ENCODE measurements at regions of chr22 and their contacts with region 1.

Region 1: DNA sequence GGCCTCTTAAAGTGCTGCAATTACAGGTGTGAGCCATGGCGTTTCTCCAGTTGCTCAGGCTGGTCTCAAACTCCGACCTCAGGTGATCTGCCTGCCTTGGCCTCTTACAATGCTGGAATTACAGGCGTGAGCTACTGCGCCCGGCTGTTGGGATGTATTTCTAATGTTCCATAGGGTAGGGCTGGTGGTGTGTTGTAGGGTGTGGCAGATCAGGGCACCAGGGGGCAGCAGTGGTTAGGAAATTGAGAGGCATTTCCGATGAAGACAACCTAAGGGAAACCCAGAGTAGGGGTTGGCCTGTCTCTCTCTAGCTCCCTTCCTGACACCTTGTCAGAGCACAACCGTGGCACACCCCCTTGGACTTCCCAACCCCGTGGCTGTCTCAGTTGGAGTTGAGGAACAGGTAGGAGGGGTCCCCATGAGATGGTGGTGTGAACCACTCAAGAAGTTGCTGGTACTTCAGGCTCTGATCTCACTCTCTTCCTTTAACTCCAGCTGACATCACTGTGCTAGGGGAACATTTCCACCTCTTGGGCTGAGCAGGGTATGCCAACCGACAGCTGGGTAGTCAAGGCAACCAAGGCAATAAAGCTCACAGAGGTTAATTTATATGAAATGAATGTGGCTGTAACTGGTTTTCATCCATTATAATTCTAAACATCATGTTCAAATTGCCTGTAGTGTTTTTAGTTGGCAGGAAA is 33.0 kb downstream of the YWHAH start:
- DNase-seq: peak; percentile 91
- H3K4me3 ChIP-seq: no peak overlapping the region
- H3K27ac ChIP-seq: no peak overlapping the region
- H3K4me1 ChIP-seq: peaks cover 0 to 25% (median 5%) of the 10 kb centered on the region in 4 donors
- H3K27me3 ChIP-seq: no peaks in the 10 kb centered on the region
- CTCF ChIP-seq: peak; percentile 64 to 90 (median 75)
- EP300 ChIP-seq: no peak
- POLR2A ChIP-seq: no peak

Region 2: DNA sequence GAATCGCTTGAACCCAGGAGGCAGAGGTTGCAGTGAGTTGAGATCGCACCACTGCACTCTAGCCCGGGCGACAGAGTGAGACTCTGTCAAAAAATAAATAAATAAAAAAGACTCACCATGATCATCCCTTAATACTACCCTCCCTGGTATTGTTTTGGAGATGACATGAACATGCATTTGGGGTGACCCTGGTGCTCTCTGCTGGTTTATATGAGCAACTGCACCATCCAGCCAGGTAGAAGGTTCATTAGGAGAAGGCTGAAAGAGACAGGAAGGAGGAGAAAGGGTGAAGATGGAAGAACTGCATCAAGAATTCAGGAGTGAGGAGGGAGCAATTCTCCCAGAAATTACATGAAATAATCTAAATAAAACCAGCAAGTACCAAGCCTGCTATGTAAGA is 103.6 kb after region 1 on chr22:
- in situ Hi-C with region 1: loop called (anchors 5 to 25 kb)
- intact Hi-C with region 1: no loop called
- DNase-seq: peak; percentile 39
- H3K4me3 ChIP-seq: no peak overlapping the region
- H3K27ac ChIP-seq: no peak overlapping the region
- H3K4me1 ChIP-seq: peaks cover 0 to 33% (median 6%) of the 10 kb centered on the region in 4 donors
- H3K27me3 ChIP-seq: no peaks in the 10 kb centered on the region
- CTCF ChIP-seq: peak; percentile 47 to 82 (median 64)
- EP300 ChIP-seq: no peak
- POLR2A ChIP-seq: no peak

Region 3: GRCh38 chr22:32265882-32266767 is 288.8 kb after region 1 on chr22:
- in situ Hi-C with region 1: loop called in 3 of 4 experiments (anchors 10 to 25 kb)
- intact Hi-C with region 1: loop called (anchors 10 kb)
- DNase-seq: peak; percentile 66
- H3K4me3 ChIP-seq: peak overlapping the region in 1 of 4 donors; percentile 12
- H3K27ac ChIP-seq: peak overlapping the region in 1 of 4 donors; percentile 44
- H3K4me1 ChIP-seq: peaks cover 0 to 8% (median 0%) of the 10 kb centered on the region in 4 donors
- H3K27me3 ChIP-seq: no peaks in the 10 kb centered on the region
- CTCF ChIP-seq: peak; percentile 72 to 81 (median 76)
- EP300 ChIP-seq: no peak
- POLR2A ChIP-seq: no peak

Region 4: DNA sequence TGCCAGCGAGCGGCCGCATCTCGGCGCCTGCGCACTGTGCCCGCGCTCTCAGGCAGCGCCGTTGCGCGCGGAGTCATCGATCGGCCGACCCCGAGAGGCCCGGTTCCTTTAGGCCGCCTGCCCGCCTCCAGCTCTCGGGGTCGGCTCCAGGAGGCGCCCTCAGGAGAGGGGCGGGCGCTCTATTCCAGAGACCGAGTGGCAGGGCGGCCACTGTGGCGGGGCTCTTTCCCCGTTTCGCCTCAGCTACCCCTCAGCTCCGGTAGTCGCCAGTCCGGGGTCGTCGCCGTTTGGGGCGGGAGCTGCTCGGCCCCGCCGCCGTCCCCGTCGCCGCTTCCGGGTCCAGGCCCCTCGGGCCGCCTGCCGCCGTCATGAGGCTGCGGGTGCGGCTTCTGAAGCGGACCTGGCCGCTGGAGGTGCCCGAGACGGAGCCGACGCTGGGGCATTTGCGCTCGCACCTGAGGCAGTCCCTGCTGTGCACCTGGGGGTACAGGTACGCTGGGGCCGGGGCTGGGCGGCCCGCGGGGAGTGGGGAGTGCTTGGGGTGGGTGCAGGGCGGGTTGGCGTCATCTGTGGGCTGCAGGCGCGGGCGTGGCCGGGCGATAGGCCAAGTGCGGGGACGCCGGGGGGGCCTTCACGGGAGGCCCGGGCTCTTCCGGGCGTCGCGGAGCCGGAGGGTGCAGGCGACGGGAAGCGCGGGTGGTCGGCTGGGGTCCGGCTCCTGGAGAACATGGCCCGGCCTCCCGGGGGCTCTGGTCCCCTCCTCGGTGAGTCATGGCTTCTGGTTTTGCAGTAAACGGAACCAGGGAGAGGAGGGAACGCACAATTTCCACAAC is 497.6 kb after region 1 on chr22 and contains the start of gene FBXO7:
- in situ Hi-C with region 1: loop called in 3 of 4 experiments (anchors 25 kb)
- intact Hi-C with region 1: no loop called
- DNase-seq: peak; percentile 93
- H3K4me3 ChIP-seq: peak within 1 kb of the TSS; percentile 67 to 95 (median 93)
- H3K27ac ChIP-seq: peak within 1 kb of the TSS; percentile 97 to 100 (median 98)
- H3K4me1 ChIP-seq: peaks cover 15 to 41% (median 29%) of the 10 kb centered on the region in 4 donors
- H3K27me3 ChIP-seq: no peaks in the 10 kb centered on the region
- CTCF ChIP-seq: peak in 4 of 5 experiments; percentile 17 to 53 (median 36)
- EP300 ChIP-seq: no peak
- POLR2A ChIP-seq: peak; percentile 91
- total RNA-seq, gene FBXO7: 70.3 to 80.1 (median 76.4) TPM

Measured in transverse colon (tissue), 4 donors.